ENCODE measurements at regions of chr6 and their contacts with region 1.

Region 1: GRCh38 chr6:158869826-158870648 is 50.9 kb upstream of the EZR start:
- H3K4me3 Mint-ChIP-seq: peak overlapping the region; percentile 80
- H3K27ac Mint-ChIP-seq: peak overlapping the region; percentile 98
- H3K4me1 Mint-ChIP-seq: peaks cover 35% of the 10 kb centered on the region
- H3K27me3 Mint-ChIP-seq: peaks cover 7% of the 10 kb centered on the region

Region 2: GRCh38 chr6:158819213-158819909 is 50.7 kb before region 1 on chr6 and contains the start of gene EZR:
- intact Hi-C with region 1: loop called (anchors 1 kb)
- H3K4me3 Mint-ChIP-seq: peak within 1 kb of the TSS; percentile 96
- H3K27ac Mint-ChIP-seq: peak within 1 kb of the TSS; percentile 90
- H3K4me1 Mint-ChIP-seq: peaks cover 32% of the 10 kb centered on the region
- H3K27me3 Mint-ChIP-seq: peaks cover 3% of the 10 kb centered on the region

Region 3: GRCh38 chr6:158910484-158911348 is 40.7 kb after region 1 on chr6:
- intact Hi-C with region 1: no loop called
- H3K4me3 Mint-ChIP-seq: no peak overlapping the region
- H3K27ac Mint-ChIP-seq: peak overlapping the region; percentile 32
- H3K4me1 Mint-ChIP-seq: peaks cover 33% of the 10 kb centered on the region
- H3K27me3 Mint-ChIP-seq: no peaks in the 10 kb centered on the region

Region 4: DNA sequence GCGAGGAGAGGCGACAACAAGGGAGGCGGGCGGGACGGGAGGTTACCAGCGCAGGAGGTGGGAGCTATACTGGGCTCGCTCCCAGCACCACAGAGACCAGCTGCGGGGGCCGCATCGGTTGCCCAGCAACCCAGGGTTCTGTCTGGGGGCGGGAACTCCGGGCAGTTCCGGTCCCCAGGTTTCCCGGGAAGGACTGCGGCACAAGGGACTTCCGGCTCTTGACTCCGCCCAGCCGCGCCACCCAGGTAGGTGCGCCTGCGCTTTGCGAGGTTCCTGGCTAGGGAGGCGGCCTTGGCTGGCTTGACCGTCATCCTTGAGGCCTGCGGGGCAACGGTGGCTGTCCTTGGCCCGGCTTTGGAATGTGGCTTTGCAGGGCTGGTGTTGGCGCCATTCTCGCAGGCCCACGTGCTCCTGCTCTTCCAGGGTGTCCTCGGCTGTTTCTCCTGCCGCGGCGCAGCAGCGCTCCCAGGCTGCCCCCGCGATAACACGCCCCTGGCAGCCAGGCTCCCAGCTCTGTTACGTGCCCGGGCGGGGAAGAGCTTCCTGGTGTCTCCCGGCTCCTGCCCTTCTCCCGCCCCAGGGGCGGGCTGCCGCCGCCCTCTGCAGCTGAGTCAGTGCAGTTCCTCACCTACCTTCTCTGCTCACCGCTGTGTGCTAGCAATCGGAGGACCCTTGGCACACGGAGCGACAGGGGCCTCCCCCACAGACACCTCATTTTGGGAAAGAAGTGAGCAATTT is 129.8 kb after region 1 on chr6 and contains the start of gene RSPH3:
- intact Hi-C with region 1: no loop called
- H3K4me3 Mint-ChIP-seq: peak within 1 kb of the TSS; percentile 99
- H3K27ac Mint-ChIP-seq: peak within 1 kb of the TSS; percentile 99
- H3K4me1 Mint-ChIP-seq: peaks cover 54% of the 10 kb centered on the region
- H3K27me3 Mint-ChIP-seq: no peaks in the 10 kb centered on the region

Region 5: GRCh38 chr6:159084493-159085091 is 214.6 kb after region 1 on chr6:
- intact Hi-C with region 1: no loop called
- H3K4me3 Mint-ChIP-seq: no peak overlapping the region
- H3K27ac Mint-ChIP-seq: no peak overlapping the region
- H3K4me1 Mint-ChIP-seq: peaks cover 8% of the 10 kb centered on the region
- H3K27me3 Mint-ChIP-seq: no peaks in the 10 kb centered on the region